Psoas muscle (tissue), 8 donors: ENCODE measurements at regions of chr6 and their contacts with region 1.

Region 1: GRCh38 chr6:145829102-145829501 is 14.5 kb upstream of the FBXO30 start:
- DNase-seq: peak; percentile 22 to 76
- ATAC-seq: peak; percentile 87 to 98 (median 94)
- H3K4me3 ChIP-seq: no peak overlapping the region
- H3K27ac ChIP-seq: peak overlapping the region; percentile 34
- H3K4me1 ChIP-seq: peaks cover 26% of the 10 kb centered on the region
- H3K27me3 ChIP-seq: no peaks in the 10 kb centered on the region
- CTCF ChIP-seq: no peak

Region 2: GRCh38 chr6:145749632-145750031 is 79.5 kb before region 1 on chr6:
- intact Hi-C with region 1: no loop called
- DNase-seq: no peak
- ATAC-seq: peak; percentile 68 to 80 (median 75)
- H3K4me3 ChIP-seq: no peak overlapping the region
- H3K27ac ChIP-seq: peak overlapping the region; percentile 24
- H3K4me1 ChIP-seq: peaks cover 8% of the 10 kb centered on the region
- H3K27me3 ChIP-seq: no peaks in the 10 kb centered on the region
- CTCF ChIP-seq: no peak

Region 3: GRCh38 chr6:145875496-145876211 is 46.6 kb after region 1 on chr6:
- intact Hi-C with region 1: loop called in 1 of 2 experiments (anchors 2 kb)
- DNase-seq: no peak
- ATAC-seq: peak; percentile 68 to 89 (median 80)
- H3K4me3 ChIP-seq: no peak overlapping the region
- H3K27ac ChIP-seq: peak overlapping the region; percentile 14
- H3K4me1 ChIP-seq: peaks cover 5% of the 10 kb centered on the region
- H3K27me3 ChIP-seq: no peaks in the 10 kb centered on the region
- CTCF ChIP-seq: no peak